ENCODE measurements at regions of chr2 and their contacts with region 1.

Region 1: DNA sequence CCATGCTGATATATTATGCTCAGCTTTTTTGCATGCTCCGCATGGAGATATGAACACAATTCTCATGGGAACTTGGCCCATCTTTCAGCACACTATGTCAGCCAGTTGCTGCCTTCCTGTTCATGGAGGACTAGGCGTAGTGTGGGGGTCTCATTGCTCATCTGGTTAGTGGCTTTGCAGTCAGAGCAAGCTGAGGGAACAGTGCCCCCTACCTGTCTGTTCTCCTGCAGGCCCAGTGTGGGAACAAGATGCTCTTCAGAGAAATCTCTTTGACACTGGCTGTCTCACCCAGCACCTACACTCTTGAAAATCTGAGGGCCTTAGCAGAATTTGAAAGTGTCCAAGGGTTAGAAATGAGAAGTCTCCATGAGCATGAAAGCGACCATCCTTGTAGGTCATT is 47.1 kb downstream of the SPTBN1 start:
- DNase-seq: peak in 1 of 2 experiments; percentile 82
- H3K4me3 ChIP-seq: no peak overlapping the region
- H3K27ac ChIP-seq: no peak overlapping the region
- H3K4me1 ChIP-seq: peaks cover 0 to 3% (median 1%) of the 10 kb centered on the region in 4 experiments; a peak in 3 of 7 replicates
- H3K27me3 ChIP-seq: no peaks in the 10 kb centered on the region
- CTCF ChIP-seq: peak; percentile 81 to 93 (median 84)
- EP300 ChIP-seq: no peak
- POLR2A ChIP-seq: no peak
- RAD21 ChIP-seq: peak; percentile 92 to 95

Region 2: DNA sequence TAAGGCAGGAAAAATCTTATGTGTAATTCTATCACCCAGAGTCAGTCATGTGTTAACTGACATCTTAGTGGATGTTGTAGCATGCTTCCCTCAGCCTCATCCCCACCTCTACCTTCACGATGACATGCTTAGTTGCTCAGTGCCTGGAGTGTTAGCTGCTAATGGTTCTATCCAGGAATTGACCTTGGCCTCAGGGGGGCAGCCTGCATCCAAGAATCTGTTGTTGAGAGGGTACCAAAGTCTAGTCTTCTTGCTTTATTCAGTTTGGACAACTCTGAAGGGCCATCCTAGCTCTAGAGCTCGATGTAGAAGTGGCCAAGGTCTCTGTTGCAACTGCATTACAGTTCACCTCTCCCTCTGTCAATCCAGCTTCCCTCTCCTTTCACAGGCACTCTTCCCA is 326.6 kb before region 1 on chr2:
- CTCF ChIA-PET with region 1: interaction called, 33 read pairs
- POLR2A ChIA-PET with region 1: no interaction called
- DNase-seq: peak; percentile 10 to 63
- H3K4me3 ChIP-seq: no peak overlapping the region
- H3K27ac ChIP-seq: no peak overlapping the region
- H3K4me1 ChIP-seq: no peaks in the 10 kb centered on the region
- H3K27me3 ChIP-seq: no peaks in the 10 kb centered on the region
- CTCF ChIP-seq: peak; percentile 46 to 79 (median 70)
- EP300 ChIP-seq: no peak
- POLR2A ChIP-seq: no peak
- RAD21 ChIP-seq: peak; percentile 87 to 94

Region 3: GRCh38 chr2:54262015-54262765 is 241.0 kb before region 1 on chr2:
- CTCF ChIA-PET with region 1: no interaction called
- POLR2A ChIA-PET with region 1: no interaction called
- DNase-seq: no peak
- H3K4me3 ChIP-seq: no peak overlapping the region
- H3K27ac ChIP-seq: no peak overlapping the region
- H3K4me1 ChIP-seq: no peaks in the 10 kb centered on the region
- H3K27me3 ChIP-seq: no peaks in the 10 kb centered on the region
- CTCF ChIP-seq: no peak
- EP300 ChIP-seq: no peak
- POLR2A ChIP-seq: no peak
- RAD21 ChIP-seq: no peak

Region 4: GRCh38 chr2:54336136-54336976 is 166.8 kb before region 1 on chr2:
- CTCF ChIA-PET with region 1: interaction called, 13 read pairs
- POLR2A ChIA-PET with region 1: no interaction called
- DNase-seq: no peak
- H3K4me3 ChIP-seq: no peak overlapping the region
- H3K27ac ChIP-seq: no peak overlapping the region
- H3K4me1 ChIP-seq: peaks cover 0 to 1% (median under 1%) of the 10 kb centered on the region in 4 experiments; a peak in 3 of 7 replicates
- H3K27me3 ChIP-seq: no peaks in the 10 kb centered on the region
- CTCF ChIP-seq: no peak
- EP300 ChIP-seq: no peak
- POLR2A ChIP-seq: no peak
- RAD21 ChIP-seq: no peak

Region 5: GRCh38 chr2:54341656-54342055 is 161.5 kb before region 1 on chr2:
- CTCF ChIA-PET with region 1: interaction called, 13 read pairs
- POLR2A ChIA-PET with region 1: no interaction called
- DNase-seq: no peak
- H3K4me3 ChIP-seq: no peak overlapping the region
- H3K27ac ChIP-seq: no peak overlapping the region
- H3K4me1 ChIP-seq: no peaks in the 10 kb centered on the region
- H3K27me3 ChIP-seq: no peaks in the 10 kb centered on the region
- CTCF ChIP-seq: peak in 2 of 3 experiments; percentile 33 to 50; a peak in 2 of 4 replicates
- EP300 ChIP-seq: no peak
- POLR2A ChIP-seq: no peak
- RAD21 ChIP-seq: peak; percentile 63 to 67

Region 6: DNA sequence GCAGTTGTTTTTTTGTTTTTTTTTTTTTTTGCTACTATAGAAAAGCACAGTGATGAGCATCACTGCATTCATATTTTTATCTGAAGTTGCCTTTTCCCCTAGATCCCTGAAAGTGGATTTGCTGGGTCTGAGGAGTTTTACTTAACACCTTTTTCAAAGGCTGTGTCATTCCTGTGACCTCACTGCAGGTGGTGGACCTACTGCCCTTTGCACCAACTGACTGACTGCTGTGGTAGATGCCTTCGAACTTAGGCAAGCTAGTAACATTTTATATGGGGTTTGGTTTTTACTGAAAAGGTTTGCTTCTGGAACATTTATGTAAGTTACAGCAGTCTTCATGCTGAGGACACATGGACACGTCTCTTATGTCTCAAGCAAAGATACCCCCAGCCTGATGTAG is 10.9 kb before region 1 on chr2:
- CTCF ChIA-PET with region 1: interaction called, 24 read pairs
- POLR2A ChIA-PET with region 1: interaction called, 3 read pairs
- DNase-seq: no peak
- H3K4me3 ChIP-seq: no peak overlapping the region
- H3K27ac ChIP-seq: no peak overlapping the region
- H3K4me1 ChIP-seq: peaks cover 0 to 3% (median under 1%) of the 10 kb centered on the region in 4 experiments; a peak in 1 of 7 replicates
- H3K27me3 ChIP-seq: no peaks in the 10 kb centered on the region
- CTCF ChIP-seq: no peak
- EP300 ChIP-seq: no peak
- POLR2A ChIP-seq: no peak
- RAD21 ChIP-seq: no peak